ENCODE measurements at regions of chr9 and their contacts with region 1.

Region 1: DNA sequence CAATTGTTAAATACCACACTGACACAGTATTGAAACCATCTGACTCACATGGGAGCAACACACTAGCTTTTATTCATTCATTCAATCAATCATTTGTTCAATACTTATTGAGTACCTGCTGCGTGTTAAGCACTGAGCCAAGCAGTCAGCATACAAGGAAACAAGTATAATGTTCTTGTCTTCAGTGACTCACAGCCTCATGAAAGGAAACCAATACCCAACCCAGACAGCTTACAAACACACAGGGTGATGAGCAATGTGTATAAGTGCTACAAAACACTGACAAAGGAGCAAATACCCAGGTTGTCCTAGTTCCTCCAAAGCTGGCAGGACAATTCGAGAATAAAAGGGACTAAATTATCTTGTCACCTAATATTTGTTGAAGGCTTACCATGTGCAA is 67.6 kb upstream of the RASEF start:
- DNase-seq: no peak
- H3K4me3 ChIP-seq: no peak overlapping the region
- H3K27ac ChIP-seq: no peak overlapping the region
- H3K4me1 ChIP-seq: no peaks in the 10 kb centered on the region
- H3K27me3 ChIP-seq: peaks cover 5% of the 10 kb centered on the region
- CTCF ChIP-seq: no peak

Region 2: GRCh38 chr9:82882138-82882537 is 248.4 kb before region 1 on chr9:
- CTCF ChIA-PET with region 1: no interaction called
- POLR2A ChIA-PET with region 1: no interaction called
- intact Hi-C with region 1: no loop called
- DNase-seq: no peak
- H3K4me3 ChIP-seq: no peak overlapping the region
- H3K27ac ChIP-seq: no peak overlapping the region
- H3K4me1 ChIP-seq: no peaks in the 10 kb centered on the region
- H3K27me3 ChIP-seq: no peaks in the 10 kb centered on the region
- CTCF ChIP-seq: no peak

Region 3: GRCh38 chr9:83182071-83182470 is 51.5 kb after region 1 on chr9:
- CTCF ChIA-PET with region 1: no interaction called
- POLR2A ChIA-PET with region 1: no interaction called
- intact Hi-C with region 1: loop called (anchors 5 kb)
- DNase-seq: no peak
- H3K4me3 ChIP-seq: no peak overlapping the region
- H3K27ac ChIP-seq: no peak overlapping the region
- H3K4me1 ChIP-seq: no peaks in the 10 kb centered on the region
- H3K27me3 ChIP-seq: peaks cover 37% of the 10 kb centered on the region
- CTCF ChIP-seq: no peak

Region 4: DNA sequence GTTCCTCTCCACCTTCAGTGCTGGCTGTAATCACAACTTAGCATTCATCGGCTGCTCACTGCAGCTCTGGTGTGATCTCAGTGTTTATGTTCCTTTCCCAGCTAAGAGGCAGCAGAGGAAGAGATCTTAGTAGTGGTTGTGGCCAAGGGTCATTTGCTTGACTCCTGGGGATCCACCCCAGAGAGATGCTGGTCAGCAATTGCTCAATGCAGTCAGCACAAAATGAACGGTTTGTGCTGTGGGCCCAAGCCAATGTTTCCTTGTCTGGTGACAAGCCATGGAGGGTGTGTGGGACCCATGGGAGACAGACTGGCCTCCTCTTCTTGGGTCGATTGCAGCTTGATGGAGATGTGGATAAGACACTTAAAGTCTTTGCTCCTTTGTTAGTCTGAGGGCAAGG is 423.7 kb after region 1 on chr9:
- CTCF ChIA-PET with region 1: no interaction called
- POLR2A ChIA-PET with region 1: no interaction called
- intact Hi-C with region 1: no loop called
- DNase-seq: no peak
- H3K4me3 ChIP-seq: no peak overlapping the region
- H3K27ac ChIP-seq: no peak overlapping the region
- H3K4me1 ChIP-seq: no peaks in the 10 kb centered on the region
- H3K27me3 ChIP-seq: no peaks in the 10 kb centered on the region
- CTCF ChIP-seq: no peak